CD8-positive, alpha-beta T cell (primary cell): ENCODE measurements at regions of chr16 and their contacts with region 1.

Region 1: GRCh38 chr16:19555162-19555937 is at the start of gene VPS35L:
- DNase-seq: peak; percentile 91 to 99 (median 97)
- ATAC-seq: peak; percentile 95
- H3K4me3 ChIP-seq: peak within 1 kb of the TSS; percentile 67 to 73
- H3K4me3 Mint-ChIP-seq: peak within 1 kb of the TSS; percentile 97
- H3K27ac ChIP-seq: peak within 1 kb of the TSS; percentile 66 to 81
- H3K27ac Mint-ChIP-seq: peak within 1 kb of the TSS; percentile 96
- H3K4me1 ChIP-seq: peaks cover 10% of the 10 kb centered on the region
- H3K4me1 Mint-ChIP-seq: peaks cover 28% of the 10 kb centered on the region
- H3K27me3 ChIP-seq: no peaks in the 10 kb centered on the region
- H3K27me3 Mint-ChIP-seq: no peaks in the 10 kb centered on the region
- CTCF ChIP-seq: peak; percentile 79
- total RNA-seq, gene VPS35L: 26.5 to 27.3 TPM

Region 2: DNA sequence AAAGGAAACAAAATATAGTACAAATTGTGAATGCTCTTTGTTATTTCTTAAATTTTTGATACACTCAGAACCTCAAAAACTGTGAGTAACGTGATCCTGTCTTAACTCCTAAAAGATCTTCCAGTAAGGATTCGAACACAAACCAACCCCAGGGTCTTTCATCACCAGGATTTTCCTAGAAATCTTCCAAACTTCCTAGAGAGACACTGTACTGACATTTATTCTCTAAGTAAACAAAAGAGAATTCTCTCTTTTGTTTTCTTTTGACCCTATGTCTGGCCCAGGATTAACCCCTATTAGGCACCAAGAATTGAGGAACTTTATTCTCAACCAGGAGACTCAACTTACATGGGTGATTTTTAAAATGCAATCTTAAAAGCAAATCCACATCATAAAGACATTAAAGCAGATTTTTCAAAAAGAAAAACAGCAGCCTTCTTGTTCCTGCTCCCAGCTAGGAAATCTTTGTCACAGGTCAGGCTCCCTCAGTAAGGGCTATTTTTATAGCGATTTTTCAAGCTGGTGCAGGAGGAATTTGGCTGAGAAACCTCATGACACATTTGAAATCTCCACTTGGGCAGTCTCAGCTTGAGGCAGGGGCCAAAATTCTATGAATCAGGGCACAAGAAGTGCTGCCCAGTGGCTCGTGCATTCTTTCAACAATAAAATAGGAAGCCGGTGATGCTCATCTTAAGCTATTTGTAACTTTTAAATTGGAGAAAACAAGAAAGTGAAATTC is 622.9 kb before region 1 on chr16:
- CTCF ChIA-PET with region 1: no interaction called
- POLR2A ChIA-PET with region 1: no interaction called
- intact Hi-C with region 1: loop called (anchors 10 kb)
- DNase-seq: no peak
- ATAC-seq: no peak
- H3K4me3 ChIP-seq: no peak overlapping the region
- H3K4me3 Mint-ChIP-seq: no peak overlapping the region
- H3K27ac ChIP-seq: no peak overlapping the region
- H3K27ac Mint-ChIP-seq: no peak overlapping the region
- H3K4me1 ChIP-seq: no peaks in the 10 kb centered on the region
- H3K4me1 Mint-ChIP-seq: peaks cover 4% of the 10 kb centered on the region
- H3K27me3 ChIP-seq: no peaks in the 10 kb centered on the region
- H3K27me3 Mint-ChIP-seq: peaks cover under 1% of the 10 kb centered on the region
- CTCF ChIP-seq: no peak

Region 3: DNA sequence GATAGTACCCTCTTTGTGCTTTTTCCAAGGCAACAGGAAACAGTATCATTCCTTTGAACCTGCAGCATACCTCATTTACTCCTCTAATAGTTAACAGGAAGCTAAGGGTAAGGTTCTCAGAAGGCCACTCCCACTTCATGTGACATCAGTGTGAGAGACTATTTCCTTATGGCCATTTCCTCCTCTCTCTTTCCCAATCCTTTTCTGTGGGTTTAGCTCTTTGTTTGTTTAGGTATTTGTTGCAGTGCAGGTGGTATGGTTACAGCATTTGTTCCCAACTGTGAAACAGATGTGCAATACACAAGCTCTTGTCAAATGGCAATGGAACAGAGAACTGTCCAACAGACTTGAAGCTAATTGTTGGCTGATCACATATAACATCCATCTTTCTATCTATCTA is 122.9 kb before region 1 on chr16:
- CTCF ChIA-PET with region 1: no interaction called
- POLR2A ChIA-PET with region 1: no interaction called
- intact Hi-C with region 1: no loop called
- DNase-seq: no peak
- ATAC-seq: no peak
- H3K4me3 ChIP-seq: no peak overlapping the region
- H3K4me3 Mint-ChIP-seq: no peak overlapping the region
- H3K27ac ChIP-seq: no peak overlapping the region
- H3K27ac Mint-ChIP-seq: no peak overlapping the region
- H3K4me1 ChIP-seq: no peaks in the 10 kb centered on the region
- H3K4me1 Mint-ChIP-seq: no peaks in the 10 kb centered on the region
- H3K27me3 ChIP-seq: no peaks in the 10 kb centered on the region
- H3K27me3 Mint-ChIP-seq: peaks cover 12% of the 10 kb centered on the region
- CTCF ChIP-seq: no peak

Region 4: DNA sequence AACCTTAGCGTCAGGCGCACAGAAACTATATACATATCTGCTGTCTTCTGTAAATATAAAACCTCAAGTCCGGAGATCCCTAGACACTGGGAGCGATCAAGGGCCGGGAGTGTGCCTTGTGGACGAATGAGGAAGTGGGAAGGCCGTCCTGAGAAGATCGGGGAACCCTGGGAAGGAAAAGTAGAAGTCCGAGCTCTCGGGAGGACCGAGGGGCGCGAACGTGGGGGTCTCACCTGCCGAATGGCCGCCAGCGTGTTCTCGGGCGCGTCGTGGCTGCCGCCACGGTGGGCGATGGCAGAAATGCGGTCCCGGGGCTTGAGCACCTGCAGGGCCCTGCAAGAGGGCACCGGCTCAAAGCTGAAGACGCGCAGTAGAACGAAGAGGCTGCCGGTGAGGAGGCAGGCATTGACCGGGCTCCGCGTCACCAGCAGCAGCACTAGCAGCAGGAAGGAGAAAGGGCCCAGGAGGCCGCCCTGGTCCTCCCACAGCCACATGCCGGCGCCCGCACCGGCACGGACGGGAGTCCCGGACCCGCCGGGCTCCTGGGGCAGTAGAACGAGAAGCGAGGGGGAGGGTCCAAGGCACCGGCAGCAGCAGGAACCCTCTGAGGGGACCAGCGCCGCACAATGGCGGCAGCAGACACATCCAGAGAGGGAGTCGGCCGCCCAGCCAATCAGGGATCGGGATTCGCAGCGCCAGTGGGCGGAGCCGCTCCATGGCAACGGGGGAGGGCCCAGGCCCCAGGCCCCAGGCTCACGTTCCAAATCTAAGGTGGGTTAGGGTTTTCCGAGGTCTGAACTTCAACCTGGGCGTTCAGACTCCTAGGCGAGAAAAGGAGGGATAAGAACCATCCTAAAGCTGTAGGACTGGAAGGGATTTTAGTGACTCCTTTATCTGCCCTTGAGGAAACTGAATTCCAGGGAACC is 33.6 kb before region 1 on chr16 and contains the start of gene GDE1:
- CTCF ChIA-PET with region 1: interaction called, 25 read pairs
- POLR2A ChIA-PET with region 1: interaction called, 40 read pairs
- intact Hi-C with region 1: loop called (anchors 1 kb)
- DNase-seq: peak; percentile 76 to 96 (median 92)
- ATAC-seq: peak; percentile 74
- H3K4me3 ChIP-seq: peak within 1 kb of the TSS; percentile 62 to 85
- H3K4me3 Mint-ChIP-seq: peak within 1 kb of the TSS; percentile 93
- H3K27ac ChIP-seq: peak within 1 kb of the TSS; percentile 67 to 77
- H3K27ac Mint-ChIP-seq: peak within 1 kb of the TSS; percentile 92
- H3K4me1 ChIP-seq: peaks cover 32% of the 10 kb centered on the region
- H3K4me1 Mint-ChIP-seq: peaks cover 61% of the 10 kb centered on the region
- H3K27me3 ChIP-seq: no peaks in the 10 kb centered on the region
- H3K27me3 Mint-ChIP-seq: no peaks in the 10 kb centered on the region
- CTCF ChIP-seq: peak; percentile 22
- total RNA-seq, gene GDE1: 26.2 to 29.0 TPM

Region 5: GRCh38 chr16:19717771-19718602 is 162.6 kb after region 1 on chr16 and contains the starts of genes IQCK and KNOP1:
- CTCF ChIA-PET with region 1: interaction called, 6 read pairs
- POLR2A ChIA-PET with region 1: no interaction called
- intact Hi-C with region 1: loop called (anchors 1 kb)
- DNase-seq: peak; percentile 72 to 97 (median 86)
- ATAC-seq: peak; percentile 89
- H3K4me3 ChIP-seq: peak within 1 kb of the TSS; percentile 80 to 95
- H3K4me3 Mint-ChIP-seq: peak within 1 kb of the TSS; percentile 91
- H3K27ac ChIP-seq: peak within 1 kb of the TSS; percentile 49 to 64
- H3K27ac Mint-ChIP-seq: peak within 1 kb of the TSS; percentile 71
- H3K4me1 ChIP-seq: peaks cover 6% of the 10 kb centered on the region
- H3K4me1 Mint-ChIP-seq: peaks cover 32% of the 10 kb centered on the region
- H3K27me3 ChIP-seq: no peaks in the 10 kb centered on the region
- H3K27me3 Mint-ChIP-seq: no peaks in the 10 kb centered on the region
- CTCF ChIP-seq: no peak
- total RNA-seq, gene IQCK: 0.72 to 2.1 TPM
- total RNA-seq, gene KNOP1: 3.4 to 3.6 TPM

Region 6: GRCh38 chr16:20383106-20384029 is 828.0 kb after region 1 on chr16:
- CTCF ChIA-PET with region 1: interaction called, 5 read pairs
- POLR2A ChIA-PET with region 1: no interaction called
- intact Hi-C with region 1: loop called in 1 of 2 experiments (anchors 2 kb)
- DNase-seq: peak in 6 of 9 experiments; percentile 4 to 56 (median 32)
- ATAC-seq: no peak
- H3K4me3 ChIP-seq: no peak overlapping the region
- H3K4me3 Mint-ChIP-seq: no peak overlapping the region
- H3K27ac ChIP-seq: no peak overlapping the region
- H3K27ac Mint-ChIP-seq: no peak overlapping the region
- H3K4me1 ChIP-seq: no peaks in the 10 kb centered on the region
- H3K4me1 Mint-ChIP-seq: peaks cover 2% of the 10 kb centered on the region
- H3K27me3 ChIP-seq: no peaks in the 10 kb centered on the region
- H3K27me3 Mint-ChIP-seq: peaks cover 25% of the 10 kb centered on the region
- CTCF ChIP-seq: peak; percentile 62